ENCODE measurements at regions of chr22 and their contacts with region 1.

Region 1: GRCh38 chr22:38181453-38182247 is at the start of gene PLA2G6:
- H3K4me3 Mint-ChIP-seq: peak within 1 kb of the TSS; percentile 84
- H3K27ac Mint-ChIP-seq: peak within 1 kb of the TSS; percentile 99
- H3K4me1 Mint-ChIP-seq: peaks cover 43% of the 10 kb centered on the region
- H3K27me3 Mint-ChIP-seq: peaks cover 5% of the 10 kb centered on the region

Region 2: GRCh38 chr22:38034274-38034882 is 147.3 kb before region 1 on chr22:
- intact Hi-C with region 1: no loop called
- H3K4me3 Mint-ChIP-seq: peak overlapping the region; percentile 27
- H3K27ac Mint-ChIP-seq: peak overlapping the region; percentile 83
- H3K4me1 Mint-ChIP-seq: peaks cover 17% of the 10 kb centered on the region
- H3K27me3 Mint-ChIP-seq: peaks cover 2% of the 10 kb centered on the region

Region 3: DNA sequence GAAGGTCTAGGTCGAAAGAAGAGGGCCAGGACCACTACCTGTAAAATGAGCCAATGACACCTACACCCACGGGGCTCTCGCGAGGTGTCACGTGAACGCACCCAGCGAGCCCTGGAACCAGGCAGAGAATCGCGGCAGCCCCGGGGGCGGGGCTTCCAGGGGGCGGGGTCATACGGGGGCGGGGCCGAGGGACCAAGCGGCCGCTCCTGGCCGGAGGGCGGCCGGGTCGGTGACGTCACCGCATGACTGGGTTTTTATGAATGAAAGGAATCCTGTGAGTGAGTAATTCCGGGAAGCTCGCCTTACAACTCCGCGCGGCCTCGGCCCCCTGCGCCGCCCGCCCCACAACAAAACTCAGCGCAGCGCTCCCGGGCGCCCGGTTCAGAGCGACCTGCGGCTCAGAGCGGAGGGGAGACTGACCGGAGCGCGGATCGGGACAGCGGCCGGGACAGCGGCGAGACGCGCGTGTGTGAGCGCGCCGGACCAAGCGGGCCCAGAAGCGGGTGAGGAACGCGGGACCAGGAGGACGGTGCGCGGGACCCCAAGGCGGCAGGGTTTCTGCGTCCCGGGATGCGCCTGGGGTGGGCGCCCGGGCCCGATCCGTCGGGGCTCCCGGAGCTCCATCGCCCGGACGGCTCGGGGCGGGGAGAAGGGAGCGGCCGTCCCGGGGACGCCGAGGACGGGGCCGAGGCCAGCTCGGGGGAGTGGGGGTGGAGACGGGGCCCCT is 20.2 kb after region 1 on chr22 and contains the start of gene MAFF:
- intact Hi-C with region 1: loop called (anchors 1 kb)
- H3K4me3 Mint-ChIP-seq: peak within 1 kb of the TSS; percentile 77
- H3K27ac Mint-ChIP-seq: peak within 1 kb of the TSS; percentile 40
- H3K4me1 Mint-ChIP-seq: peaks cover 67% of the 10 kb centered on the region
- H3K27me3 Mint-ChIP-seq: peaks cover 11% of the 10 kb centered on the region

Region 4: DNA sequence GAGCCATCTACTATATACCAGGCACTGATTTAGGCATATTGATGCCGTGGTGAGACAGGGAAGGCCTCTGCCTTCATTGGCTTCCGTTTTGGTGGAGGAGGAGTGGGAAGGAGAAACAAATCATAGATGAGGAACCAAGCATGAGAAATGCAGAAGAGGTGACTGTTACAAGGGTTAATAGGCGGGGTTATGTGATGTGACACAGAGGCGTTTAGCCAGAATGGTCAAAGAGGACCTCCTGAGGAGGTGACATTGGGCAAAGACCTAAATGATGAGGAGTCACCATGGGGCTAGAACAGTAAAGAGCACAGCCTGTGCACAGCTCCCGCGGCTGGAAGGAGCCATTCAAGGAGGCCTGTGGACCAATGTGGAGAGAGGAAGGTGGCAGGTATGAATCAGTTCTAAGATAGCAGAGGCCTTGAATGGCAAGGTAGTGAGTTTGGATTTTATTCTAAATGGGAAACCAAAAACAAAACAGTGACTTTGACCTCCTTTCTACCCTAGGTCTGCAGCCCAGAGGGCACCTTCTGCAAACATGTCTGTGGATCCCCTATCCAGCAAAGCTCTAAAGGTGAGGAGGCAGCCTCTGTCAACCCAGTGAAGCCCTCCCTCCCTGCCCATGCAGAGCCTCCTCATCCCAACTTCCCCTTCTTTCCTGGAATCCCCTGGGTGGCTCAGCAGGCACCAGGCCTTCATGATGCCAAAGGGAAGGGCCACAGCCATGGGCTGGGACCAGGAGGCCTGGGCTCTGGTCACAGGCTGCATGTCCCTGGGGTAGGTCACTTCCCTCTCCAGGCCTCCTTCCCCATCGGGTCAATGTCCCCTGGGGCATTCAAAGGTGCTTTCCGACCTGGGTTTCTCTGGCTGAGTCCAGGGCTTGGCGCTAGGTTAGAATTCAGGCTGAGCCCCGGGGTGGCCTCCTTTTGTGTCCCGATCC is 31.9 kb after region 1 on chr22:
- intact Hi-C with region 1: no loop called
- H3K4me3 Mint-ChIP-seq: peak overlapping the region; percentile 63
- H3K27ac Mint-ChIP-seq: peak overlapping the region; percentile 74
- H3K4me1 Mint-ChIP-seq: peaks cover 81% of the 10 kb centered on the region
- H3K27me3 Mint-ChIP-seq: peaks cover 2% of the 10 kb centered on the region

Region 5: DNA sequence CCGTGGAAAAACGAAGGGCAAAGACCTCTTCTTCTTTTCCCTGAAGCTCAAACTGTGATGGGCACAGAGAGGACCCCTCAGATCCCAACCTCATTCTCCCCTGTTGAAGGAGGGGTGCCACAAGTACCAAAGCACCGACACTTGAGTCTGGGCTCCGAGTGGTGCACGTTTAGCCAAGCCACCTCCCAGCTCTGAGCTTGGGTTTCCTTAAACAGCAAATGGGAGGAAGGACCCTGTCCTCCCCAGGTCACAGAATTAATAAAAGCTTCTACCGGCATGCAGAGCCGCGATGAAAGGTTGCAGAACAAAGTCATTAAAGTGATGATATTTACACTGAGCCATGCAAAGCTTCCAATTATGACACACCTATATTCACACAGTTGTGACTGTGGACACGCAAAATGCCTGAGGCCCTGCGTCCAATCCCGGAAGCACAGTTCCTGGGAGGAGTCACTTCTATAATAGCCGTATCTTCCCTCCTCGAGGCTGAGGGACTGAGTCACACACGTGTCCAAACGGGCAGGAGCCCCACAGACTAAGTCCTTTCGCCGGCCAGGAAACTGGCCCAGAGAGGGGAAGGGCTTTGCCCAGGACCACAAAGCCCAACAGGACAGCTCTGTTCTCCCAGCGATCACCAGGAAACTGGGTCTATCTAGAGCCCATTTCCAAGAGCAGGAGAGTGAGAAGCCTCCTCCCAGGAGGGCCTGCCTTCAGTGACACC is 136.5 kb after region 1 on chr22:
- intact Hi-C with region 1: no loop called
- H3K4me3 Mint-ChIP-seq: peak overlapping the region; percentile 84
- H3K27ac Mint-ChIP-seq: peak overlapping the region; percentile 93
- H3K4me1 Mint-ChIP-seq: peaks cover 53% of the 10 kb centered on the region
- H3K27me3 Mint-ChIP-seq: peaks cover 47% of the 10 kb centered on the region

Measured in dendritic cell treated with granulocyte-macrophage colony-stimulating factor and Interleukin-4, amounts not matched to agents 40 ng/mL and 50 ng/mL, for 4 days (primary cell).